ENCODE measurements at regions of chr12 and their contacts with region 1.

Region 1: DNA sequence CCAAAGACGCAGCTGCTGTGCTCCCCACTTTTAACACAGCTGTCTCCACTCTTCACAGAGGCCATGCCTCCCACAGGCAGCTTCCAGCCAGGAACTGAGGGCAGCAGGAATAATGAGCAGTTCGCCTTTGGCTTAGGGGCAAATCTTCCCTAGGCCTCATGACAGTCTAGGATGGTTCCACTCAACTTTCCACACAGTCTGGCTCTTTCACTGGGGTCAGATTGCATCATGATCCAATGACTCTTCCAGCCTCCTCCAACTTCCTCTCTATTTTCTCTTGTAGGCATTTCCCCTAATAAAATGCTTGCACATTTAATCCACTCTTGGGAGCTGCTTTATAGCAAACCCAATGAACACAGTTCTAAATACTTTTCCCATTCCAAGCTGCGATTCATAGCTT is 271.6 kb upstream of the ATP2B1 start:
- H3K4me3 Mint-ChIP-seq: no peak overlapping the region
- H3K27ac Mint-ChIP-seq: peak overlapping the region; percentile 86
- H3K4me1 Mint-ChIP-seq: peaks cover 36% of the 10 kb centered on the region
- H3K27me3 Mint-ChIP-seq: peaks cover 2% of the 10 kb centered on the region

Region 2: GRCh38 chr12:89969098-89969497 is 11.1 kb before region 1 on chr12:
- intact Hi-C with region 1: loop called (anchors 1 kb)
- H3K4me3 Mint-ChIP-seq: no peak overlapping the region
- H3K27ac Mint-ChIP-seq: no peak overlapping the region
- H3K4me1 Mint-ChIP-seq: peaks cover 27% of the 10 kb centered on the region
- H3K27me3 Mint-ChIP-seq: peaks cover 6% of the 10 kb centered on the region

Region 3: GRCh38 chr12:90305379-90305778 is 325.1 kb after region 1 on chr12:
- intact Hi-C with region 1: no loop called
- H3K4me3 Mint-ChIP-seq: no peak overlapping the region
- H3K27ac Mint-ChIP-seq: no peak overlapping the region
- H3K4me1 Mint-ChIP-seq: no peaks in the 10 kb centered on the region
- H3K27me3 Mint-ChIP-seq: no peaks in the 10 kb centered on the region